ENCODE measurements at regions of chr12 and their contacts with region 1.

Region 1: DNA sequence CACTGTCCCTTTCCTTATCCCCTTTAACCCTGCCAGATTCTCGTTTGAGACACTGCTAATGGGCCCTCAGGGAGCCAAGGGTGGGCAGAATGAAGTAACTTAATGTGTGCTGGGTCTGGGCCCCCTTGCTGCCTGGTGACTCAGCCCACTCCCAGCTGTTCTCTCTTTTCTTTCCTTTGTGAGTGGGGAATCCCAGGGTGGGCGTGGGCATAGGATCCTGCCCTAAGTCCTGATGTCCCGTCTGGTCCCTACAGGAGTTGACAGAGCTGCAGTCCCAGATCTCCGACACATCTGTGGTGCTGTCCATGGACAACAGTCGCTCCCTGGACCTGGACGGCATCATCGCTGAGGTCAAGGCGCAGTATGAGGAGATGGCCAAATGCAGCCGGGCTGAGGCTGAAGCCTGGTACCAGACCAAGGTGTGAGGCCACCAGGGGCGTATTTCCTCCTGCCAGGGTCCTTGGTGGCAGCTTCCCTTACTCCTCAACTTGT is 8.2 kb downstream of the KRT7 start:
- DNase-seq: no peak
- ATAC-seq: no peak
- H3K4me3 Mint-ChIP-seq: no peak overlapping the region
- H3K27ac Mint-ChIP-seq: no peak overlapping the region
- H3K4me1 Mint-ChIP-seq: peaks cover 20% of the 10 kb centered on the region
- H3K27me3 Mint-ChIP-seq: peaks cover 2% of the 10 kb centered on the region
- CTCF ChIP-seq: no peak

Region 2: GRCh38 chr12:52258335-52258901 is 17.2 kb after region 1 on chr12:
- CTCF ChIA-PET with region 1: interaction called, 4 read pairs
- POLR2A ChIA-PET with region 1: interaction called, 3 read pairs
- intact Hi-C with region 1: loop called (anchors 2 kb)
- DNase-seq: no peak
- ATAC-seq: no peak
- H3K4me3 Mint-ChIP-seq: no peak overlapping the region
- H3K27ac Mint-ChIP-seq: no peak overlapping the region
- H3K4me1 Mint-ChIP-seq: peaks cover 7% of the 10 kb centered on the region
- H3K27me3 Mint-ChIP-seq: peaks cover 58% of the 10 kb centered on the region
- CTCF ChIP-seq: no peak

Measured in activated CD8-positive, alpha-beta T cell treated with anti-CD3 and anti-CD28 coated beads for 36 hours (primary cell).